CD14-positive monocyte (primary cell): ENCODE measurements at regions of chr16 and their contacts with region 1.

Region 1: DNA sequence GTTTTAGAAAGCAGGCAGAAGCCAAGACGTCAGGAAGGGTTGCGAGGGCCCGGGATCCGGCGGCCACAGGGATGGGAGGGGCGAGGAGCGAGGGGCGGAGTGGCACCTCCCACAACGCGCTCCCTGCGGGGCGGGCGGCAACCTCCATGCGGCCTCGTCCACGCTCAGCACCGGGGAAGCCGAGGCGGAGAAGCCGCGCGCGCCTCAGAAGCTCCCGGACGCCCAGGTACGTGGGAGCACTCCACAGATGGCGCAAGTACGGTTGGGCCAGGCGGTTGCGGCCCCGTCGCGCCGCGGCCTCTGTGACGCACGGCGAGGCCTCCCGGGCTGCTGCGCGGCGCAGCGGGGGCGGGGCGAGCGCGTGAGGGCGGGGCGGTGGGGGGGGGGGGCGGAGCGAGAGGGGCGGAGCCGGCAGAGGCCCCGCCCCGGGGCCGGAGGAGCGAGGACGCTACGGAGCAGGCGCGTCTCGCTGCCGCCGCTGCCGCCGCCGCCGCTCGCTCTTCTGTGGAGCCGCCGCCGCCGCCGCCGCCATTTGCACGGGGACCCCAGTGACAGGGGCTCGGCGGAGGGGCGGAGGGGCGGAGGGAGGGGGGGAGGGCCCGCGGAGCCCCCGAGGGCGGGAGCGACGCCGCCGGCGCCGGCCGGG is at the start of gene TENT4B:
- DNase-seq: peak; percentile 75 to 87 (median 84)
- H3K4me3 ChIP-seq: peak within 1 kb of the TSS; percentile 75 to 97 (median 96)
- H3K4me3 Mint-ChIP-seq: peak within 1 kb of the TSS; percentile 93 to 94
- H3K27ac ChIP-seq: peak within 1 kb of the TSS; percentile 61 to 89
- H3K27ac Mint-ChIP-seq: peak within 1 kb of the TSS; percentile 68 to 95 (median 88)
- H3K4me1 ChIP-seq: peaks cover 30 to 38% of the 10 kb centered on the region in 2 donors
- H3K4me1 Mint-ChIP-seq: peaks cover 35% of the 10 kb centered on the region
- H3K27me3 ChIP-seq: no peaks in the 10 kb centered on the region
- H3K27me3 Mint-ChIP-seq: no peaks in the 10 kb centered on the region
- CTCF ChIP-seq: no peak
- polyA plus RNA-seq, gene TENT4B: 1.4 to 9.0 (median 1.7) TPM

Region 2: DNA sequence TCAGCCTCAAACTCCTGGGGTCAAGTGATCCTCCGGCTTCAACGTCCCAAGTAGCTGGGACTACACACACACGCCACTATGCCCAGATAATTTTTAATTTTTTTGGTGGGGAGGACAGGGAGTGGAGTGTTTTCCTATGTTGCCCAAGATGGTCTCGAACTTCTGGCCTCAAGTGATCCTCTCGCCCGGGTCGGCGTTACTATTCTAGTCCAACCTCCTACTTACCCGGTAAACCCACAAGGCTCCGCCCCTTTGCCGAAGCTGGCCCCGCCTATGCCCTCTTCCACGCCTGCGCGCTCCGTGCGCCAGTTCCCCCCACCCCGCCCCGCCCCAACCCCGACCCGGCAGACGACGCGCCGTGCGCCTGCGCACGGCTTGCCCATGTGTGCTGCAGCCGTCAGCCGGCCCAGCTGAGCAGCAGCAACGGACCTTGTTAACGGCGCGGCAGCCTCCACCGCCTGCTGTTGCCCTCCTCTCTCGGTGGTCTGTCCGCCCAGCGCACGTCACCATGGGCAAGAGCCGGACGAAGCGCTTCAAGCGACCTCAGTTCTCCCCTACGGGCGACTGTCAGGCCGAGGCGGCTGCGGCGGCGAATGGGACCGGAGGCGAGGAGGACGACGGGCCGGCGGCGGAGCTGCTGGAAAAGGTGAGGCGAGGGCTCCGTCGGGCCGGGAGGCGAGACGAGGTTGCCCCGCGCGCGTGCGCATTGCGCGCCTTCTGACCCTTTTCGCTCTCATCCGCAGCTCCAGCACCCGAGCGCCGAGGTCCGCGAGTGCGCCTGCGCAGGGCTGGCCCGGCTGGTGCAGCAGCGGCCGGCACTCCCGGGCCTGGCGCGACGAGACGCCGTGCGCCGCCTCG is 87.1 kb before region 1 on chr16 and contains the start of gene HEATR3:
- intact Hi-C with region 1: loop called in 1 of 2 experiments (anchors 5 kb)
- DNase-seq: peak; percentile 89 to 96 (median 91)
- H3K4me3 ChIP-seq: peak within 1 kb of the TSS; percentile 51 to 96 (median 93)
- H3K4me3 Mint-ChIP-seq: peak within 1 kb of the TSS; percentile 92 to 94
- H3K27ac ChIP-seq: peak within 1 kb of the TSS; percentile 66 to 87
- H3K27ac Mint-ChIP-seq: peak within 1 kb of the TSS; percentile 89 to 97 (median 95)
- H3K4me1 ChIP-seq: peaks cover 26% of the 10 kb centered on the region in 2 donors
- H3K4me1 Mint-ChIP-seq: peaks cover 35% of the 10 kb centered on the region
- H3K27me3 ChIP-seq: no peaks in the 10 kb centered on the region
- H3K27me3 Mint-ChIP-seq: peaks cover 0 to 2% (median 1%) of the 10 kb centered on the region in 3 donors
- CTCF ChIP-seq: no peak
- polyA plus RNA-seq, gene HEATR3: 10.4 to 40.6 (median 10.7) TPM

Region 3: DNA sequence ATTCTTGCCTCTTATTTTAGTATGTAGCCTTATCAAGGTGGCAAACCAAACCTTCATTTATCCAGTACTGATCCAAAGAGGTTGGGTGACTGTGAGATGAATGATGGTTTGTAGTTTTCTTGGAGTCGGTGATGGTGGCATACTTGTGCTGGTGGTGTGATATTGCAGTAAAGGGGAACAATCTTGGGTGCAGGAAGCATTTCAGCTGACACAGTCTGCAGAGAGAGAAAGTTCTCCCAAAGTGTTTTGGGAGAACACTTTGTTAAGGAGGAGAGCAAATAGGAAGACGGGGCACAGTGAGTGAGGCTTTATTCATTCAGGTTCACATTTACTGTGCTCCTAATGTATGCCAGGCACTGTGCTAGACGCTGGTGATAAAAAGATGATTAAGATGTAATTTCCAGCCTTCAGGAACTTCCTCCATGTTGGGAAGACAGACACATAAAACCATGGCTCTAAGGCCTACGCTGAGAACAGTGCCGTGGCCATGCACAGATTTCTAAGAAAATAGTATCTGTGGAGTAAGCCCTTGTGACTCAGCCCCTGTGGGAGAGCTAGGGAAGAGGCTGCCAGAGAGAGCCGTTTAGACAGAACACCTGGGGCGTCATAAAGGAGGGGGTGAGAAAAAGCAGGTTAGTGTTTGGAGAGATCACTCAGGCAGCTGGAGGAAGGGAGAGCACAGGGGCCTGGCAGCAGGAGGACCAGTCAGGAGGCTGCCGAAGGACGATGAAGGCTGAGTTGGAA is 73.4 kb before region 1 on chr16:
- intact Hi-C with region 1: no loop called
- DNase-seq: no peak
- H3K4me3 ChIP-seq: no peak overlapping the region
- H3K4me3 Mint-ChIP-seq: no peak overlapping the region
- H3K27ac ChIP-seq: peak overlapping the region in 1 of 2 donors; percentile 7
- H3K27ac Mint-ChIP-seq: peak overlapping the region in 4 of 7 donors; percentile 30 to 84 (median 54)
- H3K4me1 ChIP-seq: peaks cover 3 to 5% of the 10 kb centered on the region in 2 donors
- H3K4me1 Mint-ChIP-seq: peaks cover 5% of the 10 kb centered on the region
- H3K27me3 ChIP-seq: no peaks in the 10 kb centered on the region
- H3K27me3 Mint-ChIP-seq: no peaks in the 10 kb centered on the region
- CTCF ChIP-seq: no peak

Region 4: GRCh38 chr16:50093607-50094539 is 59.1 kb before region 1 on chr16:
- intact Hi-C with region 1: loop called (anchors 5 kb)
- DNase-seq: peak; percentile 97 to 98 (median 98)
- H3K4me3 ChIP-seq: peak overlapping the region in 1 of 3 experiments; percentile 16
- H3K4me3 Mint-ChIP-seq: peak overlapping the region in 1 of 2 donors; percentile 65
- H3K27ac ChIP-seq: peak overlapping the region; percentile 94 to 97
- H3K27ac Mint-ChIP-seq: peak overlapping the region; percentile 90 to 98 (median 97)
- H3K4me1 ChIP-seq: peaks cover 19% of the 10 kb centered on the region in 2 donors
- H3K4me1 Mint-ChIP-seq: peaks cover 19% of the 10 kb centered on the region
- H3K27me3 ChIP-seq: no peaks in the 10 kb centered on the region
- H3K27me3 Mint-ChIP-seq: peaks cover 0 to 2% (median 0%) of the 10 kb centered on the region in 3 donors
- CTCF ChIP-seq: no peak

Region 5: GRCh38 chr16:50210266-50211038 is 57.5 kb after region 1 on chr16:
- intact Hi-C with region 1: loop called in 1 of 2 experiments (anchors 5 kb)
- DNase-seq: peak; percentile 13 to 25 (median 24)
- H3K4me3 ChIP-seq: peak overlapping the region in 1 of 3 experiments; percentile 55
- H3K4me3 Mint-ChIP-seq: peak overlapping the region; percentile 35 to 75
- H3K27ac ChIP-seq: peak overlapping the region; percentile 59 to 79
- H3K27ac Mint-ChIP-seq: peak overlapping the region; percentile 52 to 92 (median 89)
- H3K4me1 ChIP-seq: peaks cover 36 to 39% of the 10 kb centered on the region in 2 donors
- H3K4me1 Mint-ChIP-seq: peaks cover 38% of the 10 kb centered on the region
- H3K27me3 ChIP-seq: no peaks in the 10 kb centered on the region
- H3K27me3 Mint-ChIP-seq: no peaks in the 10 kb centered on the region
- CTCF ChIP-seq: peak; percentile 56

Region 6: DNA sequence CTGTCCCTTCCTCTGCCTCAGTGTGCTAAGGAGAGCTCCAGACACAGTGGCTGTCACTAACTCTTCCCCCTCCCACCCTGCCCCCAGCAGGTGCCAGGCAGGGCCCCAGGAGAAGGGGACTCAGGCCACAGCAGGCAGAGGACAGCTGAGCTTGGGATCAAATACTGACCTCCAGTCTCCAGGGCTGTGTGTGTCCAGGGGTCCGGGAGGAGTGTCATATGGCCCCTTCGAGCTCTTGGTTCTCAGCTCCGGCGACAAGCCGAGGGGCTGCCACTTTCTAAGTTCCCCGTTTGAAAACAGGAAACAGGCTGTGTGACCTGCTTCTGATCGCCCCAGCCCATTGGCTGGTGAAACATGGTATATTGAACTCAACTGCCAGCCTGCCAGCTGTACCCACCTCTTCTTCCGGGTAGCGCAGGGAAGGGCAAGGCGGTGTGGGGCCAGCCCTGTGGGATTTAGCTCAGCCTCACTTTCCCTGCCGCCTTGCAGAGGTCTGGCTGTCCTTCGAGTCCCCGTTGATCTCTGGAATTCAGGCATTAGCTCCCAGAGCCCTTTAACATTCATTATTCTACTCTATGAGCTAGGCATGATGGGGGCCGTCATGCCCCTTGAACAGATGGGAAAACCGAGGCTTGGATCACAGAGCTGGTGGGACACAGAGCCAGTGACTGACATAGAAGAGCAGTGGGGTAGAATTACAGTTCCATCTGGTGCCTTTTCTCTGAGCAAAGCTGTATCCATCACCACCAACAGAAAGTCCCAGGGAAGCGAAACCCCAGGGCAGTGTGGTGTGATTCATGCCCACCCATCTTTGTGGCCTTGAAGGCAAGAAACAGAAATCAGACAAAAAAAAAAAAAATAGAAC is 528.3 kb after region 1 on chr16 and contains the start of gene SNX20:
- intact Hi-C with region 1: loop called in 1 of 2 experiments (anchors 10 kb)
- DNase-seq: peak; percentile 80 to 90 (median 86)
- H3K4me3 ChIP-seq: peak within 1 kb of the TSS; percentile 51 to 92 (median 84)
- H3K4me3 Mint-ChIP-seq: peak within 1 kb of the TSS; percentile 80 to 95
- H3K27ac ChIP-seq: peak within 1 kb of the TSS; percentile 86 to 100
- H3K27ac Mint-ChIP-seq: peak within 1 kb of the TSS; percentile 96 to 100 (median 98)
- H3K4me1 ChIP-seq: peaks cover 82 to 92% of the 10 kb centered on the region in 2 donors
- H3K4me1 Mint-ChIP-seq: peaks cover 81% of the 10 kb centered on the region
- H3K27me3 ChIP-seq: no peaks in the 10 kb centered on the region
- H3K27me3 Mint-ChIP-seq: peaks cover 0 to 6% (median 2%) of the 10 kb centered on the region in 3 donors
- CTCF ChIP-seq: no peak
- polyA plus RNA-seq, gene SNX20: 51.0 to 83.2 (median 52.0) TPM